Activated CD8-positive, alpha-beta T cell treated with anti-CD3 and anti-CD28 coated beads for 36 hours (primary cell): ENCODE measurements at regions of chr4 and their contacts with region 1.

Region 1: DNA sequence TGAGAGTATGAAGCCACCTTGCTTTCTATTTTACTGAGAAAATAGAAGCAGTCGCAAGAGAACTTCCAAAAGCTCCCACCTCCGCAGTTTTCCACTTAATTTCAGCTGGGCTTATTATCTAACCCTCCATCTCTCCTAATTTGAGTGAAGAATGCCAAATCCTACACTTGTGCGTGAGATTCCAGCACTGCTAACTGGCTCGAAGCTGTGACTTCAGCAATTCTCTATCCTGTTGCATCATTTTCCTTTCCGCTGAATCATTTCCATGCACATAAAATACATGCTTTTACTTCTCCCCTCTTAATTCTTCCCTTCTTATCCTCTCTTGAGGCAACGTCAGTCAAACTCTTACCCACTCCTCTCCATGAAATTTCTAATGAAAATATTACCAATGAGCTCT is 189.5 kb downstream of the GASK1B start:
- DNase-seq: no peak
- ATAC-seq: no peak
- H3K4me3 Mint-ChIP-seq: no peak overlapping the region
- H3K27ac Mint-ChIP-seq: no peak overlapping the region
- H3K4me1 Mint-ChIP-seq: peaks cover 2% of the 10 kb centered on the region
- H3K27me3 Mint-ChIP-seq: peaks cover 7% of the 10 kb centered on the region
- CTCF ChIP-seq: no peak

Region 2: DNA sequence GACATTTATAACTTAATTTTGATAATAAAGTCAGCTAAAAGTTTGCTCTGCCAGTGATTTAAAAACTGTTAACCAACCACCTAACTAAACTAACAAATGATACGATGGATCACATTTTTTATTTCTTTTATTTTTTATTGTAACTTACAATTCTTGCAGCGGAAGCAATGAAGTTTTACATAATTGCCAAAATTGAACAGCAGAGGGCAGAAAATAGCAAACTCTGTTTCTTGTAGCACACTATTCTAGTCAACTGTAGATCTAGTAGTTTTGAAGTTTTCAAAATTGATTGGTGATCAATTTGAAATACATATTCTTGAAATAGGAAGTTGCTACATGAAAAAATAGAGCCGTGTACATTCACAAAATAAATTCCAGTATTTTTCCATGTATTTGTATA is 765.6 kb before region 1 on chr4:
- CTCF ChIA-PET with region 1: interaction called, 4 read pairs
- POLR2A ChIA-PET with region 1: no interaction called
- intact Hi-C with region 1: loop called (anchors 10 kb)
- DNase-seq: no peak
- ATAC-seq: no peak
- H3K4me3 Mint-ChIP-seq: no peak overlapping the region
- H3K27ac Mint-ChIP-seq: no peak overlapping the region
- H3K4me1 Mint-ChIP-seq: no peaks in the 10 kb centered on the region
- H3K27me3 Mint-ChIP-seq: peaks cover 24% of the 10 kb centered on the region
- CTCF ChIP-seq: peak; percentile 37